ENCODE measurements at regions of chr6 and their contacts with region 1.

Region 1: GRCh38 chr6:3277851-3278416 is 19.2 kb downstream of the PSMG4 start:
- DNase-seq: no peak
- H3K4me3 Mint-ChIP-seq: no peak overlapping the region
- H3K27ac Mint-ChIP-seq: no peak overlapping the region
- H3K4me1 Mint-ChIP-seq: peaks cover 2% of the 10 kb centered on the region
- H3K27me3 Mint-ChIP-seq: no peaks in the 10 kb centered on the region

Region 2: DNA sequence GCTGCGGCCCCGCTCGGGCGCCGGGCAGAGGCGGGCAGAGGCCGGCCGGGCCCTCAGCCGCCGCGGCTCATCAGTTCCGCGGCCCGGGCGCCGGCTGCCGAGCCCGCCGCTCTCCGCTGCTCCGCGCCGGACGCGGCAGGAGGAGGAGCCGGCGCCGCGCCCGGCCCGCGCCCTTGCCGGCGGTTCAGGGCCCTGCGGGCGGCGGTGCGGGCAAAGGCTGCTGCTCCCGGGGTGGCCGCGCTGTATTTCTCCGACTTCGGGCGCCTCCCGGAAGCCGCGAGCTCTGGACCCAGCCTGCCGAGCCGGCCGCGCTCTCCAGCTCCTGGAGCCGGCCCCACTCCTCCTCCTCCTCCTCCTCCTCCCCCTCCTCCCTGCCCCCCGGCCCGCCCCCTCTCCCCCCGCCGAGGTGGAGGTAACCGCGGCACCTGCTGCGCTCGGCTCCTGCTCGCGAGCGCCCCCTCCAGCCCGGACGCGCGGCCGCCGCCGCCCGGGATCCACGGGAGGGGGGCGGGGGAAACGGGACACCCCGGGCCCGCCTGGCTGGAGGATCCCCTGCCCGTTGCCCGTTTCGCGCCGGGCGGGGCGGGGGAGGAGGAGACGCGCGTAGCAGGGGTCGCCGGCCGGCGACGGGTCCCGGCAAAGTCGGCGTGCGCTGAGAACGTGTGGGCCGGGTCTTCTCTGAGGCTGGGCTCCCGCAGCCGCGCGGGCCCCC is 179.0 kb after region 1 on chr6 and contains the start of gene SLC22A23:
- intact Hi-C with region 1: loop called (anchors 5 kb)
- DNase-seq: peak; percentile 52
- H3K4me3 Mint-ChIP-seq: peak within 1 kb of the TSS; percentile 77
- H3K27ac Mint-ChIP-seq: peak within 1 kb of the TSS; percentile 43
- H3K4me1 Mint-ChIP-seq: peaks cover 8% of the 10 kb centered on the region
- H3K27me3 Mint-ChIP-seq: peaks cover 49% of the 10 kb centered on the region
- total RNA-seq, gene SLC22A23: 0.07 TPM in 1 of 2 replicates, not detected in the other

Region 3: DNA sequence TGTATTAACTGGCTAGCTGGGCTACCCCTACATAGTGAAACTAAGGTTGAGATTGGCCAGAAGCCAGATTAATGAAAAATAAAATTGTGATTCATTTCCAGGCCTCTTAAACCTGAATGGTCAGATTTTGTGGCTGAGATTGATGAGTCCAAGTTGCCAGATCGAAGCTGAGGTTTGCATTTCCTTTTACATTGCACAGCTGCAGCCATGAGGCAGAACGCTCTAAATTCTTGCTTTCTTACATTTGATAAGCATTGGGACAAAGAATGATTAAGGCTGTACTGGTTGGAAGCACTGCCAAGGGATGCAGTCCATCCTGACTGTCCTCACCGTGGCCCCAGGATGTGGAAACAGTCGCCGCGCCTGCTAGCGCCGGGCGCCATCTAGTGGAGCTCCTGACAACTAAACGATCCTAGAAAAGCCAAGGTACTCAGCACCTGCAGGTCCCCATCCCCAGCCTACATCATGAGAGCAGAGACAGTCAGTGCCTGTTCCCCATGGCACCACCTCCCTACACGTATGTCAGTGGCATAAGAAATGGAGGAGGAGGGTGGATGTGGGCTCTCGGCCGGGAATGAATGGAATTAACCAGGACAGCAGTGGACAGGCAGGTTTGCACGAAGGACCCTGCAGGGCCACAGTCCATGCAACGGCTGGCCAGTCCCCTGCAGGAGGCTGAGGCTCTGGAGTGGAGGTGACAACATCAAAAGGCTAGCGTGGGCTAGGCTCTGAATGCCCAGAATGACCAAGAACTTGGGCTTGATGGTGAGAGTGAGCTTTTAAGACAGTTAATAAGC is 454.6 kb after region 1 on chr6:
- intact Hi-C with region 1: loop called (anchors 1 kb)
- DNase-seq: peak; percentile 40
- H3K4me3 Mint-ChIP-seq: no peak overlapping the region
- H3K27ac Mint-ChIP-seq: no peak overlapping the region
- H3K4me1 Mint-ChIP-seq: peaks cover 3% of the 10 kb centered on the region
- H3K27me3 Mint-ChIP-seq: peaks cover 7% of the 10 kb centered on the region